Colonic mucosa (tissue), 4 donors: ENCODE measurements at regions of chr10 and their contacts with region 1.

Region 1: GRCh38 chr10:116487522-116488430 is 58.0 kb upstream of the PNLIP start:
- DNase-seq: no peak
- H3K4me3 ChIP-seq: no peak overlapping the region
- H3K27ac ChIP-seq: no peak overlapping the region
- H3K4me1 ChIP-seq: no peaks in the 10 kb centered on the region
- H3K27me3 ChIP-seq: no peaks in the 10 kb centered on the region
- CTCF ChIP-seq: no peak

Region 2: DNA sequence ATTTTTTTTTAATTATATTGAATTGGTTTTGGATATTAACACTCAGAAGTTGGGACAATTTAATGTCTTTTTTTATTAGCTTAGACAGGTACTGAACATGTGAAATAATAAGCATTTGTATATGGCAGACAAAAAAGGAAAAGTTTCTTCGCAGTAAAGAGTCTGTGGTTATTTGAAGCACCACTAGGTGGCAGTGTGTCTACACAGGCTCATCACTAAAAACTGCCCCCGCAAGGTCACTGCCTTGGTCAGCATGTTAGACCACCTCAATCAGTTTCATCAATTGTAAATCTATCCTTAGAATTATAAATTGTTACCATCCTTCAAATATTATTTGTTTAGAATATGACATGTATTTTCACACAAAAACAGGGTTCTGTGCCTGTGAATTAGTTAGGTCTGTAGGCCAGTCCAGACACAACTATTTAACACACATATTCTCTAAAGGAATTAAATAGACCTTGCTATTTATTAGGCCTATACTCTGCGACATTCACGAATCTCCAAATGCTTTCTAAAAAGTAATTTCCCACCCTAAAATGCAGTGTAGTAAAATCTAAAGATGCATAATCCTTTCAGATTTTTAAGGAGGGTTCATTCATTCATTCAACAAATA is 43.1 kb before region 1 on chr10:
- intact Hi-C with region 1: loop called (anchors 5 kb)
- DNase-seq: peak; percentile 23
- H3K4me3 ChIP-seq: no peak overlapping the region
- H3K27ac ChIP-seq: no peak overlapping the region
- H3K4me1 ChIP-seq: no peaks in the 10 kb centered on the region
- H3K27me3 ChIP-seq: no peaks in the 10 kb centered on the region
- CTCF ChIP-seq: peak; percentile 76